Activated CD4-positive, alpha-beta T cell treated with anti-CD3 and anti-CD28 coated beads for 36 hours (primary cell): ENCODE measurements at regions of chr2 and their contacts with region 1.

Region 1: GRCh38 chr2:74529357-74530238 is at the starts of genes AUP1 and HTRA2:
- DNase-seq: peak; percentile 97
- ATAC-seq: peak; percentile 90
- H3K4me3 Mint-ChIP-seq: peak within 1 kb of the TSS; percentile 100
- H3K27ac Mint-ChIP-seq: peak within 1 kb of the TSS; percentile 98
- H3K4me1 Mint-ChIP-seq: peaks cover 35% of the 10 kb centered on the region
- H3K27me3 Mint-ChIP-seq: no peaks in the 10 kb centered on the region
- total RNA-seq, gene AUP1: 92.0 to 122 TPM
- total RNA-seq, gene HTRA2: 43.5 to 47.7 TPM

Region 2: GRCh38 chr2:74391580-74392448 is 137.8 kb before region 1 on chr2:
- CTCF ChIA-PET with region 1: no interaction called
- POLR2A ChIA-PET with region 1: no interaction called
- intact Hi-C with region 1: loop called in 1 of 2 experiments (anchors 1 kb)
- DNase-seq: peak; percentile 98
- ATAC-seq: peak; percentile 78
- H3K4me3 Mint-ChIP-seq: peak overlapping the region; percentile 86
- H3K27ac Mint-ChIP-seq: peak overlapping the region; percentile 99
- H3K4me1 Mint-ChIP-seq: peaks cover 7% of the 10 kb centered on the region
- H3K27me3 Mint-ChIP-seq: no peaks in the 10 kb centered on the region

Region 3: DNA sequence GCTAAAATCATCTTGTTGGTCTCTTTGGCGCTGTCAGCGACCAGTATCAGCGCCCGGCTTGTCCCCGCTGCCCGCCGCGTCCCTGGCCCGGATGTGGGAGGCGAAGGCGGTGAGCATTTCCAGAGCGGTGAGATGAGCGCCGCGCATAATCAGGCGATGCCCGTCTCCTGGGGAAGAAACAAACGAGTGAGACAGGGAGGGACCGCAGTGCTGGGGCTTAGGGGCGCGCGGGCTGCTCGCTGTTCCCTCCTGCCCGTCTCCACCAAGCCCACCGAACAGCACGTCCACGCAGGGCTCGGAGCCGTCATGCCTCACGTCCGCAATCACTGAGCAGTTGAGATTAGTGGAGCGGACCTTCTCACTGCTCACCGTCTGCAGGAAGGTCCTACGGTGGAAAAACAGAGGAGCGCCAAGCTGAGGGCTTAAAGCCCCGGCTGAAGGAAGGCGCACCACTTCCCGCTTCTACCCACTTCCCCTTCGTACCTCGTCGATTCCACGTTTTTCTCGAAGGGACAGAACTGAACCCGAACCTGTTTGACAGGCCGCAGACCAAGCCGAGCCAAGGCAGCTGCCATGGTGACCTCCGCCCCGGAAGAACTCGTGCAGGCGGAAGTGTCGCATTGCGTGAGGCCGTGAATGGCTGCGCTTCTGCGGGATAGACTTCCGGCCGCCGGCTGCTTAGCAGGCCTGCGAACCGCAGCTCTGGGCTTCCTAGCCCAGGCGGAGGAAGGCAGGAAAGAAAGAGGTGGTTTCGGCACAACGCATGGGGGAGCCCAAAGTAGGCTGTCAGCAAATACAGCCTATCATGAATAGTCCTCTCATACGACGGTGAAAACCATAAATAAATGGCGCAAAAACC is 57.3 kb before region 1 on chr2 and contains the start of gene MRPL53:
- CTCF ChIA-PET with region 1: interaction called, 4 read pairs
- POLR2A ChIA-PET with region 1: no interaction called
- intact Hi-C with region 1: loop called (anchors 1 kb)
- DNase-seq: peak; percentile 97
- ATAC-seq: peak; percentile 92
- H3K4me3 Mint-ChIP-seq: peak within 1 kb of the TSS; percentile 98
- H3K27ac Mint-ChIP-seq: peak within 1 kb of the TSS; percentile 93
- H3K4me1 Mint-ChIP-seq: peaks cover 21% of the 10 kb centered on the region
- H3K27me3 Mint-ChIP-seq: no peaks in the 10 kb centered on the region
- total RNA-seq, gene MRPL53: 87.4 to 88.5 TPM

Region 4: GRCh38 chr2:74498500-74499266 is 30.9 kb before region 1 on chr2:
- CTCF ChIA-PET with region 1: interaction called, 4 read pairs
- POLR2A ChIA-PET with region 1: interaction called, 4 read pairs
- intact Hi-C with region 1: loop called in 1 of 2 experiments (anchors 5 kb)
- DNase-seq: peak; percentile 49
- ATAC-seq: peak; percentile 63
- H3K4me3 Mint-ChIP-seq: peak overlapping the region; percentile 77
- H3K27ac Mint-ChIP-seq: peak overlapping the region; percentile 15
- H3K4me1 Mint-ChIP-seq: peaks cover 31% of the 10 kb centered on the region
- H3K27me3 Mint-ChIP-seq: peaks cover 50% of the 10 kb centered on the region

Region 5: GRCh38 chr2:74587664-74588277 is 58.2 kb after region 1 on chr2:
- CTCF ChIA-PET with region 1: interaction called, 19 read pairs
- POLR2A ChIA-PET with region 1: no interaction called
- intact Hi-C with region 1: loop called (anchors 1 to 5 kb)
- DNase-seq: peak; percentile 75
- ATAC-seq: peak; percentile 62
- H3K4me3 Mint-ChIP-seq: no peak overlapping the region
- H3K27ac Mint-ChIP-seq: no peak overlapping the region
- H3K4me1 Mint-ChIP-seq: peaks cover 26% of the 10 kb centered on the region
- H3K27me3 Mint-ChIP-seq: peaks cover 3% of the 10 kb centered on the region

Region 6: DNA sequence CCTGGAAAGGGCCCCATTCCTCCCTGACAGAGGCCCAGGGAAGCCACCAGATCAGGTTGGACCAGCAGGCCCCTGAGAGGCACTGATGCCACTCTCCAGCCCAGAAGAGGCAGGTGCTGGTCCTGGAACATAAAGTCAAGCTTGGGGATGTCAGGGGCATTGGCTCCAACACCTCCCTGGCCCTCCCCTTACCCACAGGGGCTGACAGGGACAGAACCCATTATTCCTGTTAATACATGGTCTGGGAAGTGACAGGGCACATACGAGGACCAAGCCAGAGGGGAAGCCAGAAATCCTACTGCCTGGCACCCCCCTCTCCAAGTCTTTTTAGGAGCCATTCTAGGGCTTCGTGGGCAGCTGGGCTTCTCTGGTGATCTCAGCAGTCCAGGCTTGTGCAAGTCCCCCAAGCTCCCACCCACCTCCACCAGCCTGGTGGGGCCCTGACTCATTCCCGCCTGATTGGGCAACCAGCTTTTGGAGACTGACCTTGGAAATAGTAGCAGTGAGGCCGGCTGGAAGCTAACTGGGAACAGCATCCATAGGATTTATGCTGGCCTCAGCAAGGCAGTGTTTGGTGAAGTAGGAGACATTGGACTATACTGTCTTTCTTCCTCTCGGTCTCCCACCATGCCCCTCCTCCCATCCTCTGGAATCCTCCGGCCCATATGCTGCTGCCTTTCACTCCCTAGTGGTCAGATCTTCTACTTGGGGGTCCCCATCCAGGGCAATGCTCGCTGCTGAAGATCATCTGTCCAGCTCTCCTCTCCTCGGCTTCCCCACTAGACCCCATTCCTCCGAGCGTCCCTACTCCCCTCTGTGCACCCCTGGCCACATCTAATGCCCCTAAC is 218.0 kb after region 1 on chr2:
- CTCF ChIA-PET with region 1: no interaction called
- POLR2A ChIA-PET with region 1: no interaction called
- intact Hi-C with region 1: no loop called
- DNase-seq: no peak
- ATAC-seq: no peak
- H3K4me3 Mint-ChIP-seq: no peak overlapping the region
- H3K27ac Mint-ChIP-seq: no peak overlapping the region
- H3K4me1 Mint-ChIP-seq: no peaks in the 10 kb centered on the region
- H3K27me3 Mint-ChIP-seq: no peaks in the 10 kb centered on the region